ENCODE measurements at regions of chr16 and their contacts with region 1.

Region 1: DNA sequence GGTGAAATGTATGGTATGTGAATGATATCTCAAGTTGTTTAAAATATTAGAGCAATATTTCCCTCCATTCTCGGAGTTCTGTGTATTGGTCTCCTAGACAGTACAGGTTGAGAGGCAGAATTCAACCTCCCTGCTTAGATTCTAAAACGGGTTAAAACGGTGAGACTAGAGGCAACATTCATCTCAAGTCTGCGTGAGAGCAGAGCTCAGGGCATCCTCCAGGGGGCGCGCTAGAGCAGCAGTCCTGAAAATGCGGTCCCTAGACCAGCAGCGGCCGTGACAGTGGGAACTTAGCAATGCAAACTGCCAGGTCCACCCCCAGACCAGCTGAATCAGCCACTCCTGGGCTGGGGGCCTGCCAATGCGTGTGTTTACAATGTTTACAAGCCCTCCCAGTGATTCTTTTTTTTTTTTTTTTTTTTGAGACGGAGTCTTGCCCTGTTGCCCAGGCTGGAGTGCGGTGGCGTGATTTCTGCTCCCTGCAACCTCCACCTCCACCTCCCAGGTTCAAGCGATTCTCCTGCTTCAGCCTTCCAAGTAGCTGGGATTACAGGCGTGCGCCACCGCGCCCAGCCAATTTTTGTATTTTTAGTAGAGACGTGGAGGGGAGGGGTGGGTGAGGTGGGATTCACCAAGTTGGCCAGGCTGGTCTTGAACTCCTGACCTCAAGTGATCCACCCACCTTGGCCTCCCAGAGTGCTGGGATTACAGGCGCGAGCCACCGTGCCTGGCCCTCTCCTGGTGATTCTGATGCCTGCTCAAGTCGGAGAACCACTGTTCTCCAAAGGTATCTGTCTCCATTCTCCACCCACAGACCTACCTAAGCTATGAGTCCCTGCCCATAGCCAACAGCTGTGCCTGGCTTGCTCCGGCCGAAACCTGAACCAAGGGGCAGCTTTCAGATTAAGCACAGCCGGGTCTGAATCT is 24.2 kb downstream of the KLHL36 start:
- DNase-seq: peak; percentile 68
- ATAC-seq: peak; percentile 95
- H3K4me3 ChIP-seq: no peak overlapping the region
- H3K27ac ChIP-seq: no peak overlapping the region
- H3K4me1 ChIP-seq: peaks cover 4% of the 10 kb centered on the region
- H3K27me3 ChIP-seq: no peaks in the 10 kb centered on the region
- CTCF ChIP-seq: peak; percentile 89
- POLR2A ChIP-seq: no peak
- RAD21 ChIP-seq: peak; percentile 82

Region 2: DNA sequence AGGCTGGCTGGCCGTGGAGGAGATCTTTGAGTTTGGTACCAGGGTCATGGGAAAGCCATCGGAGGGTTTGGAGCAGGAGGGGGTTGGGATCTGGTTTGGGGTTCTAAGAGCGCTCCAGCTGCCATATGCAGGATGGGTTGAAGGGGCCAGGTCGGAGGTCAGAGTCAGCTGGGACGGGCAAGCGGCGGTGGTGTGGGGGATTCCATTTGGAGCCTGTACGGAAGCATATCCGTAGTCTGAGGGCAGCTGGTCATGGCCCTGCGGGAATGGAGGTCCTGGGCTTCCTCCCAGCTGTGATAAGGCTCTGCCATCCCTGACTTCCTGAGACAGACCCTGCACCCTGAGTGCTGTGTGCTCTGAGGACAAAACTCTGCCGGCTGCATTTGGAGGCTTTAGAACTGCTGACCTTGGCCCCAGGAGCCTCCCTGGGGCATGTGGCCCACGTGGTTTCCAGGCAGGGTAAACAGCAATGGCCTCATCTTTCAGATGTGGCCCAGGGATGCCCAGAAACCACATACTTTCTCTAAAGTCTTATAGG is 257.7 kb before region 1 on chr16:
- CTCF ChIA-PET with region 1: no interaction called
- POLR2A ChIA-PET with region 1: no interaction called
- dilution Hi-C with region 1: no loop called
- in situ Hi-C with region 1: no loop called
- intact Hi-C with region 1: no loop called
- DNase-seq: no peak
- ATAC-seq: no peak
- H3K4me3 ChIP-seq: no peak overlapping the region
- H3K27ac ChIP-seq: no peak overlapping the region
- H3K4me1 ChIP-seq: no peaks in the 10 kb centered on the region
- H3K27me3 ChIP-seq: peaks cover 60% of the 10 kb centered on the region
- CTCF ChIP-seq: no peak
- POLR2A ChIP-seq: no peak
- RAD21 ChIP-seq: no peak

Region 3: DNA sequence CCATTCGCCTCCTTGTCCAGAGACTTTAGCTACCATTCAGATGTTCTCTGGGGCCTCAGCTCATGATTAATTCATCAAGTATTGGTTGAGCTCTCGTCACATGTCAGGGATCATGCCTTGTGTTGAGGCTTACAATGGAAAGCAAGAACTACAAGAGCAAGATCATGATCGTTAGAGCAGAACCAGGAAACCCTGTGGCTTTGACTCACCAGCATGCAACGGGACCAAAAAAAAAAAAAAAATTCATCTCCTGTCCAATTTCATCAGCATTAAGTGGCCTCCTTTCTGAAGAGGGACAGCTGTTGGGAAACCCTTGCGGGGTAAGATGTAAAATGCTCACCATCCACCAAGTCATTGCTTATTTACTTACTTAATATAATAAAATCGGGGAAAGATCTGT is 15.2 kb after region 1 on chr16:
- CTCF ChIA-PET with region 1: interaction called, 10 read pairs
- POLR2A ChIA-PET with region 1: no interaction called
- dilution Hi-C with region 1: no loop called
- in situ Hi-C with region 1: no loop called
- intact Hi-C with region 1: no loop called
- DNase-seq: peak; percentile 96
- ATAC-seq: peak; percentile 57
- H3K4me3 ChIP-seq: no peak overlapping the region
- H3K27ac ChIP-seq: peak overlapping the region; percentile 24; the same call in 1 of the 2 replicates
- H3K4me1 ChIP-seq: peaks cover 9% of the 10 kb centered on the region
- H3K27me3 ChIP-seq: no peaks in the 10 kb centered on the region
- CTCF ChIP-seq: no peak
- POLR2A ChIP-seq: no peak
- RAD21 ChIP-seq: no peak

Region 4: DNA sequence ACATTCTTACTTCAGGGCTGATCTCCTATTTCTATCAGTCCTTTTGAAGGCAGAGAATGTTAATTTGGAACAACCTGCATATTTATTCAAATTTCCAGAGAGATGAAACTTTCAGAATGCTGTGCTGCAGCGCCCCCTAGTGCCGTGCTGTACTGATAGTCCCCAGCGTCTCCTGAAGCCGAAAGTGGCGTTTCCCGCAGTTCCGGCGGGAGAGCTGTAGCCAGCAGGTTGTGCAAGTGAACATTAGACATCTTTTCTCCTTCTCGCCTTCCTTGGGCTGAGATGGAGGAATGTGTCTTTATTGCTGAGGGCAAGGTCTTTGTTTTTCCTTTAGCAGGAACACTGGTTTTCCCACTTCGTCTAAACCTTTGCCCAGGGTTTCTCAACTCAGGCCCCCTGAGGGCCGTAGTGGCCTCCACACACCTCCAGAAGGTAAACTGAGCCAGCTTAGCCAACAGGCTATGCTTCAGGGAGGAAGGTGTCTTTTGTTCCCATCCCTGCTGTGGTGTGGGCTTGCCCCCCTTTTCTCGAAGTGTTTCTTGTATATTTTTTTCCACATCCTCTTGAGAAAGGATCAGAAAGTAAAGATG is 53.6 kb after region 1 on chr16:
- CTCF ChIA-PET with region 1: interaction called, 12 read pairs
- POLR2A ChIA-PET with region 1: no interaction called
- dilution Hi-C with region 1: no loop called
- in situ Hi-C with region 1: loop called (anchors 5 kb)
- intact Hi-C with region 1: loop called (anchors 1 kb)
- DNase-seq: peak; percentile 85
- ATAC-seq: peak; percentile 66
- H3K4me3 ChIP-seq: no peak overlapping the region
- H3K27ac ChIP-seq: peak overlapping the region; percentile 24
- H3K4me1 ChIP-seq: peaks cover 15% of the 10 kb centered on the region
- H3K27me3 ChIP-seq: no peaks in the 10 kb centered on the region
- CTCF ChIP-seq: peak; percentile 95
- POLR2A ChIP-seq: no peak
- RAD21 ChIP-seq: peak; percentile 96